PC-3 (cell line): ENCODE measurements at regions of chr12 and their contacts with region 1.

Region 1: GRCh38 chr12:39443081-39443928 is at the start of gene KIF21A:
- DNase-seq: peak; percentile 97
- ATAC-seq: peak; percentile 90
- H3K4me3 ChIP-seq: peak within 1 kb of the TSS; percentile 81
- H3K27ac ChIP-seq: peak within 1 kb of the TSS; percentile 61
- H3K4me1 ChIP-seq: peaks cover 22% of the 10 kb centered on the region
- H3K27me3 ChIP-seq: no peaks in the 10 kb centered on the region
- CTCF ChIP-seq: no peak
- total RNA-seq, gene KIF21A: 21.7 and 25.1 TPM in 2 replicates

Region 2: GRCh38 chr12:39341179-39341578 is 102.1 kb before region 1 on chr12:
- CTCF ChIA-PET with region 1: no interaction called
- POLR2A ChIA-PET with region 1: no interaction called
- intact Hi-C with region 1: no loop called
- DNase-seq: no peak
- ATAC-seq: no peak
- H3K4me3 ChIP-seq: no peak overlapping the region
- H3K27ac ChIP-seq: no peak overlapping the region
- H3K4me1 ChIP-seq: no peaks in the 10 kb centered on the region
- H3K27me3 ChIP-seq: no peaks in the 10 kb centered on the region
- CTCF ChIP-seq: no peak

Region 3: GRCh38 chr12:39393890-39394289 is 49.4 kb before region 1 on chr12:
- CTCF ChIA-PET with region 1: no interaction called
- POLR2A ChIA-PET with region 1: no interaction called
- intact Hi-C with region 1: loop called (anchors 2 kb)
- DNase-seq: no peak
- ATAC-seq: no peak
- H3K4me3 ChIP-seq: no peak overlapping the region
- H3K27ac ChIP-seq: no peak overlapping the region
- H3K4me1 ChIP-seq: no peaks in the 10 kb centered on the region
- H3K27me3 ChIP-seq: no peaks in the 10 kb centered on the region
- CTCF ChIP-seq: no peak

Region 4: GRCh38 chr12:39503445-39503844 is 60.1 kb after region 1 on chr12:
- CTCF ChIA-PET with region 1: no interaction called
- POLR2A ChIA-PET with region 1: interaction called, 3 read pairs
- intact Hi-C with region 1: loop called (anchors 5 kb)
- DNase-seq: peak; percentile 84
- ATAC-seq: peak; percentile 77
- H3K4me3 ChIP-seq: no peak overlapping the region
- H3K27ac ChIP-seq: no peak overlapping the region
- H3K4me1 ChIP-seq: peaks cover 32% of the 10 kb centered on the region
- H3K27me3 ChIP-seq: no peaks in the 10 kb centered on the region
- CTCF ChIP-seq: peak; percentile 66

Region 5: GRCh38 chr12:39807043-39807442 is 363.7 kb after region 1 on chr12:
- CTCF ChIA-PET with region 1: no interaction called
- POLR2A ChIA-PET with region 1: no interaction called
- intact Hi-C with region 1: no loop called
- DNase-seq: peak; percentile 27
- ATAC-seq: peak; percentile 61
- H3K4me3 ChIP-seq: no peak overlapping the region
- H3K27ac ChIP-seq: no peak overlapping the region
- H3K4me1 ChIP-seq: no peaks in the 10 kb centered on the region
- H3K27me3 ChIP-seq: no peaks in the 10 kb centered on the region
- CTCF ChIP-seq: peak; percentile 56